ENCODE measurements at regions of chr15 and their contacts with region 1.

Region 1: DNA sequence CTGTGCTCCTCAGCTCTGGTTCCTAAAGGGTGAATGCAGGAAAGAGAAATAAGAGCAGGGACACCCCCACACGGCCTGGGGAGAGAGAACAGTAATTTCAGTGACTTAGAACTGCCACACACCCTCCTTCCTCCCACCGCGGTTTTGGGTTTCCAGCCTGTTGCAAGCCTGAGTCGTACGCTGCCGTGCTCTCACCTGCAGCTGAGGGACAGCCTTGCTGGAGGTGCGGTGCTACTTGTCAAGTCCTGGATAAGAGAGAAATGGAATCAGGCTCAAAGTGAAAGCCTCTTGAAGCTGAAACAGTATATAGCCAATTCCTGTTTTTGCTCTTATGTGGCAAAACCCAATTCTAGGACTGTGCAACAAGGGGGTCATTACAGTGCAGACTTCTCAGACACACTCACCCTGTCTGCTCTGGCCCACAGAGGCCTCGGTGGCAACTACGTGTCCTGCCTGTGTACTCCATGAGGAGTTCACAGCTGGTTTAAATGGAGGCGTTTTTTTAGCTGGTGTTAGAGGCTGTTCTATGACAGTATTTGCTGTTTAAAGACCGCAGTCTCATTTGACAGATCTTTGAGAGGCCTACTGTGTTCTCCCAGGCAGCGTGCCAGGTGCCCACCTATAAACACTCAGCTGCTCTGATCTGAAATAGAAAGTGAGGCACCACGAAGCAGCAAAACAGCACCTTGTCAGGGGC is 42.9 kb downstream of the TBC1D2B start:
- DNase-seq: peak; percentile 92
- H3K4me3 Mint-ChIP-seq: peak overlapping the region; percentile 75
- H3K27ac Mint-ChIP-seq: peak overlapping the region; percentile 76
- H3K4me1 Mint-ChIP-seq: peaks cover 72% of the 10 kb centered on the region
- H3K27me3 Mint-ChIP-seq: no peaks in the 10 kb centered on the region

Region 2: DNA sequence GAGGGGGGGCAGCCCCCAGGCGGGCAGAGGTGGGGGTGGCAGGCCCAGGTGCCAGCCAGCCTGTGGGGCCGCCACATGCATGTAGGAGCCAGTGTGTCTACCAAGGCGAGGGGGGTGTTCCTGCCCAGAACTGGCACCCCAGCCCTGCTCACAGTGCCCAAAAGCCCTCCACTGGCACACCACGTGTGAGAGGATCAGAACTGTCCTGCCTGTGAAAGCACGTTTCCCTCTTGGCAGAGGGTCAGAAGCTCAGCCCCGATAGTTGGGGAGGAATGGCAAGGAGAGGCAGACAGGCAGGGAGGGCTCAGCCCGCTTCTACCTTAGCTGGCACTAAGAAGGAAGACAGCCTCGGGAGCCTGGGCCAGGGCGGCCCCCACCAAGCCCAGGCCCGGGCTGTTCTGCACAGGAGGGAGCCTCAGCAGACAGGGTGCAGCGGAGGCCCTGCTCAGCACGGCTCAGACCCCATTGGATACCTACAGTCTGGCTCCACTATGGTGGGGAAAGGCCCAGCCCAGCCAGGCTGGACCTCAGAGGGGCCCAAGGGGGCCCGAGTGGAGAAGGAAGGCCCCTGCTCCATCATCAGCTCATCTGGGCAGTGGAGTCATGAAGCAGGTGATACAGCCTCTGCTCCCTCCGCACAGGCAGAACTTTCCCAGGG is 317.2 kb before region 1 on chr15:
- intact Hi-C with region 1: no loop called
- DNase-seq: no peak
- H3K4me3 Mint-ChIP-seq: no peak overlapping the region
- H3K27ac Mint-ChIP-seq: no peak overlapping the region
- H3K4me1 Mint-ChIP-seq: no peaks in the 10 kb centered on the region
- H3K27me3 Mint-ChIP-seq: peaks cover 5% of the 10 kb centered on the region

Region 3: GRCh38 chr15:78049691-78050440 is 15.2 kb after region 1 on chr15:
- intact Hi-C with region 1: loop called (anchors 1 kb)
- DNase-seq: peak; percentile 89
- H3K4me3 Mint-ChIP-seq: peak overlapping the region; percentile 79
- H3K27ac Mint-ChIP-seq: peak overlapping the region; percentile 98
- H3K4me1 Mint-ChIP-seq: peaks cover 86% of the 10 kb centered on the region
- H3K27me3 Mint-ChIP-seq: no peaks in the 10 kb centered on the region

Measured in activated CD4-positive, alpha-beta T cell treated with anti-CD3 and anti-CD28 coated beads, Interleukin-2, amount 10 ng/mL, durations not matched to agents 24 days and 14 days (primary cell).